Panc1 (cell line): ENCODE measurements at regions of chr15 and their contacts with region 1.

Region 1: DNA sequence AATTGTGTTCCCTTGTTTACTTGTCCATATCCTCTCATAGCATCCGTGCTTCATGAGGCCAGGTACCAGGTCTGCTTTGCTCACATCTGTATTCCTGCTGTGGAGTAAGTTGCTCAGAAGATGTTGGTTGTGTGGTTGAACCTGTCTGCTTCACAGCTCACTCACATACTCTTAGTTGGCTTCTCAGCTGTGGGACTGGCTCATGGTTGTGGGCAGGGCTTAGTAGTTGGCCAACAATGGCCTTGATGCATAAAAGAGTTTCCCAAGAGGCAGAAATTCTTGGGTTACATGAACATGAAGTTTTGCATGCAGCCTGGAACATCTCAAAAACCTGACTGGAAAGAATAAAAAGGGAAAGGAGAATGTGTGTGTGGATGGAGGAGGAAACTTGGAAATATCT is 17.0 kb downstream of the CELF6 start:
- DNase-seq: no peak
- ATAC-seq: no peak
- H3K4me3 ChIP-seq: no peak overlapping the region
- H3K27ac ChIP-seq: no peak overlapping the region
- H3K4me1 ChIP-seq: no peaks in the 10 kb centered on the region
- H3K27me3 ChIP-seq: no peaks in the 10 kb centered on the region
- CTCF ChIP-seq: no peak

Region 2: DNA sequence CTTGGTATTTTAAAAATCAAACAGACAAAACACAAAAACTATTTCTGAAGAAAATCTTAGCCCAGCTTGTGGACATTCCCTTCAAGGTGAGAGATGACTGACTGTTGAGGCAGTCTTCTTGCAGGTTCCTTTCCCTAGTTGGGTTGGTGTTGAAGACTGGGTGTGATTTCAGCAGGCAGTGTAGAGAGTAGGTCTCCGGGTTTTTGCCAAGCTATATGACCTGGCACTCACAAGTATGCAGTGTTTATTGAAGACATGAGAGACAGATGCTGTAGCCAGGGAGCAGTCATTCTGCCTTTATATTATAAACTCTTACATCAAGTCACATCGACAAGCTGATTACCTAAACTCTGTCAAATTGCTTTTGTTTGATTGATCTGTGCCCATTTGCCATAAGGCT is 167.2 kb before region 1 on chr15:
- CTCF ChIA-PET with region 1: no interaction called
- POLR2A ChIA-PET with region 1: no interaction called
- in situ Hi-C with region 1: no loop called
- intact Hi-C with region 1: no loop called
- DNase-seq: no peak
- ATAC-seq: no peak
- H3K4me3 ChIP-seq: no peak overlapping the region
- H3K27ac ChIP-seq: no peak overlapping the region
- H3K4me1 ChIP-seq: 0 out of 2 replicates have a peak, but pooled peaks cover 3% of the 10 kb centered on the region
- H3K27me3 ChIP-seq: no peaks in the 10 kb centered on the region
- CTCF ChIP-seq: no peak

Region 3: GRCh38 chr15:72737723-72738405 is 434.9 kb after region 1 on chr15:
- CTCF ChIA-PET with region 1: no interaction called
- POLR2A ChIA-PET with region 1: no interaction called
- in situ Hi-C with region 1: no loop called
- intact Hi-C with region 1: loop called (anchors 5 kb)
- DNase-seq: no peak
- ATAC-seq: no peak
- H3K4me3 ChIP-seq: no peak overlapping the region
- H3K27ac ChIP-seq: no peak overlapping the region
- H3K4me1 ChIP-seq: no peaks in the 10 kb centered on the region
- H3K27me3 ChIP-seq: no peaks in the 10 kb centered on the region
- CTCF ChIP-seq: no peak